Activated naive CD4-positive, alpha-beta T cell treated with anti-CD3 and anti-CD28 coated beads, Interleukin-2, amount 10 ng/mL, durations not matched to agents 7 days and 5 days (primary cell): ENCODE measurements at regions of chr16 and their contacts with region 1.

Region 1: GRCh38 chr16:50747207-50747956 is 5.5 kb downstream of the CYLD start:
- DNase-seq: peak; percentile 34
- H3K4me3 Mint-ChIP-seq: peak overlapping the region; percentile 81
- H3K27ac Mint-ChIP-seq: peak overlapping the region; percentile 92
- H3K4me1 Mint-ChIP-seq: peaks cover 60% of the 10 kb centered on the region
- H3K27me3 Mint-ChIP-seq: no peaks in the 10 kb centered on the region

Region 2: GRCh38 chr16:50671644-50672260 is 75.6 kb before region 1 on chr16:
- CTCF ChIA-PET with region 1: interaction called, 183 read pairs
- DNase-seq: peak; percentile 75
- H3K4me3 Mint-ChIP-seq: no peak overlapping the region
- H3K27ac Mint-ChIP-seq: peak overlapping the region; percentile 75
- H3K4me1 Mint-ChIP-seq: peaks cover 40% of the 10 kb centered on the region
- H3K27me3 Mint-ChIP-seq: no peaks in the 10 kb centered on the region

Region 3: GRCh38 chr16:50681021-50681885 is 66.1 kb before region 1 on chr16 and contains the start of gene SNX20:
- CTCF ChIA-PET with region 1: interaction called, 33 read pairs
- DNase-seq: peak; percentile 82
- H3K4me3 Mint-ChIP-seq: peak within 1 kb of the TSS; percentile 92
- H3K27ac Mint-ChIP-seq: peak within 1 kb of the TSS; percentile 91
- H3K4me1 Mint-ChIP-seq: peaks cover 90% of the 10 kb centered on the region
- H3K27me3 Mint-ChIP-seq: no peaks in the 10 kb centered on the region

Region 4: GRCh38 chr16:50719518-50720337 is 27.7 kb before region 1 on chr16:
- CTCF ChIA-PET with region 1: interaction called, 10 read pairs
- DNase-seq: peak; percentile 46
- H3K4me3 Mint-ChIP-seq: no peak overlapping the region
- H3K27ac Mint-ChIP-seq: no peak overlapping the region
- H3K4me1 Mint-ChIP-seq: peaks cover 33% of the 10 kb centered on the region
- H3K27me3 Mint-ChIP-seq: no peaks in the 10 kb centered on the region